ENCODE measurements at regions of chr4 and their contacts with region 1.

Region 1: DNA sequence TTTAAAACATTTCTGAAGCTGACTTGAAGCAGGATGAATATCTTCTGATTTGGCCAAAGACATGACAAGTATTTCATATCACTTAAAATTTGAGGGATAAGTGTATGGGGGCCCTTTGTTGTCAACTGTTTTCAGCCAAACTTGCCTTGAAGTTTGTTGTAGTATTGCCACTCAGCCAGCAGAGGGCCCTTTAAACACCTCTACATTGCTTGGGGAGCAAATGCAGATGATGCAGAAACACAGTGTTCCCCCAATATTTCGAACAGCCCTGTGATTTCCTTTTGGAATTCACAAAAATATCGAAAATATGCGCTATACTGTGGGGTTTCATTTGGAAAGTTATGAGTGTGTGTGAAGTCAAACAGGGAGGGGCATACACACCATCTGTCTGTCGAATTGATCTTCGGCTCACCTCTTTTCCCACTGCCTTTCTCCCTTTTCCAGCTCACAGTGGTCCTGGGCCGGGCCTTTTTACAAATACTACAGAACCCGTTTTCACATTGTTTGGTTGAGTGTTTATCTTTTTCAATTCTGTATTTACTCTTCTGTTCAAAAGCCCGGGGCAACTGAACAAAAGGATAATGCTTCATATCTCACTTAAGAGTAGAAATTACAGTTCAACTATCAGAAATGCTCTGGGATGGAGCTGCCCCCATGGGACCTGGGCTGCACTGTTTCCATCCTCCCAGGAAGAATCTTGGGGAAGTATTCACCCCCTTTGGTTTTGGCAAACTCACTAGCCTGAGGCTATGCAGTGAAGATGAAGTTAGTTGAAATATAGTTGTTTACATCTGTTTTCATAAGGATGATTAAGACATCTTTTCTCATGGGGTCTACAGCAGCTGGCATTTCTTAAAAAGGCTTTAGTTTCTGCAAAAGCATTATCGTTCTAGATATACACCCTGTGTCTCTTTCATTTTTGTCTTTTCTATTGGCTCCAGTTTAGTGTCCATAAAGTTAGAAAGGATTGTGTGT is 137.6 kb downstream of the EGF start:
- DNase-seq: peak in 1 of 2 experiments; percentile 39
- H3K4me3 ChIP-seq: no peak overlapping the region
- H3K4me3 Mint-ChIP-seq: no peak overlapping the region
- H3K27ac Mint-ChIP-seq: no peak overlapping the region
- H3K4me1 ChIP-seq: no peaks in the 10 kb centered on the region
- H3K4me1 Mint-ChIP-seq: no peaks in the 10 kb centered on the region
- H3K27me3 ChIP-seq: no peaks in the 10 kb centered on the region
- H3K27me3 Mint-ChIP-seq: no peaks in the 10 kb centered on the region
- CTCF ChIP-seq: peak; percentile 70 to 81

Region 2: GRCh38 chr4:109702950-109703663 is 347.1 kb before region 1 on chr4 and contains the start of gene CASP6:
- CTCF ChIA-PET with region 1: no interaction called
- POLR2A ChIA-PET with region 1: no interaction called
- intact Hi-C with region 1: no loop called
- DNase-seq: peak; percentile 80 to 85
- H3K4me3 ChIP-seq: peak within 1 kb of the TSS; percentile 91
- H3K4me3 Mint-ChIP-seq: peak within 1 kb of the TSS; percentile 83
- H3K27ac Mint-ChIP-seq: peak within 1 kb of the TSS; percentile 90
- H3K4me1 ChIP-seq: peaks cover 22% of the 10 kb centered on the region
- H3K4me1 Mint-ChIP-seq: peaks cover 22% of the 10 kb centered on the region
- H3K27me3 ChIP-seq: no peaks in the 10 kb centered on the region
- H3K27me3 Mint-ChIP-seq: no peaks in the 10 kb centered on the region
- CTCF ChIP-seq: peak; percentile 37 to 68
- total RNA-seq, gene CASP6: 35.9 and 36.7 TPM in 2 replicates

Region 3: DNA sequence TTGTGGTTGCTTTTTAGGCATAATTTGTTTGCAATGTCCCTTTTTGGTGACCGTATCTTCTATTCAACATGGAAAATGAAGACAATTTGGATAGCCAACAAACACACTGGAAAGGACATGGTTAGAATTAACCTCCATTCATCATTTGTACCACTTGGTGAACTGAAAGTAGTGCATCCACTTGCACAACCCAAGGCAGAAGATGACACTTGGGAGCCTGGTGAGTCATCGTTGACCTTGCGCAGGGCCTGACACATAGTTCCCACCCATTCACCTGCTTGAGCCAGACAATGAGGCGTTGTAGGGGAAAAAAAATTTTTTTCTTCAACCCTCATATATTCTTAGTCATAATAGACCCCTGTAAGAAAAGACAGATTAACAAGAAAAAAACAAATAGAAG is 105.2 kb before region 1 on chr4:
- CTCF ChIA-PET with region 1: no interaction called
- POLR2A ChIA-PET with region 1: no interaction called
- intact Hi-C with region 1: no loop called
- DNase-seq: no peak
- H3K4me3 ChIP-seq: no peak overlapping the region
- H3K4me3 Mint-ChIP-seq: no peak overlapping the region
- H3K27ac Mint-ChIP-seq: no peak overlapping the region
- H3K4me1 ChIP-seq: no peaks in the 10 kb centered on the region
- H3K4me1 Mint-ChIP-seq: peaks cover 7% of the 10 kb centered on the region
- H3K27me3 ChIP-seq: no peaks in the 10 kb centered on the region
- H3K27me3 Mint-ChIP-seq: no peaks in the 10 kb centered on the region
- CTCF ChIP-seq: no peak

Region 4: DNA sequence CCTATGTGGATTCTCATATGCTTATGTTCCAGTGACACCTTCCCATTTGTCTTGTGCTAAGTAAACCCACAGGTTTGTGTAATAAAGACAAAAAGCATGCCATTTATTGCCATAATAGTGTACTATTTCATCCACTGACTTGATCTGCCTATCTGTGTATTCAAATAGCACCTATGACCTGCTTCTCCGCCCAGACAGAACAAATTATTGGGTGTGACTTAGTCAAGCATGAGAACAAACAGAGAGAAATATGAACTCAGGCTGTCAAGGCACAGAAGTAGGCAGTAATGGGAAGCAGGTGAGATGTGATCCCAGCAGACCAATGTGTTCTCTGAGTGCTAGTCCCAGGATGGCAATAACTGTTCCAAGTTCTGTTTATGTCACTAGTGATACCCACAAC is 122.7 kb after region 1 on chr4:
- CTCF ChIA-PET with region 1: no interaction called
- POLR2A ChIA-PET with region 1: no interaction called
- intact Hi-C with region 1: loop called (anchors 1 kb)
- DNase-seq: peak; percentile 27 to 66
- H3K4me3 ChIP-seq: no peak overlapping the region
- H3K4me3 Mint-ChIP-seq: no peak overlapping the region
- H3K27ac Mint-ChIP-seq: peak overlapping the region; percentile 25
- H3K4me1 ChIP-seq: peaks cover 24% of the 10 kb centered on the region
- H3K4me1 Mint-ChIP-seq: peaks cover 15% of the 10 kb centered on the region
- H3K27me3 ChIP-seq: no peaks in the 10 kb centered on the region
- H3K27me3 Mint-ChIP-seq: no peaks in the 10 kb centered on the region
- CTCF ChIP-seq: no peak